OCI-LY7 (cell line): ENCODE measurements at regions of chr7 and their contacts with region 1.

Region 1: DNA sequence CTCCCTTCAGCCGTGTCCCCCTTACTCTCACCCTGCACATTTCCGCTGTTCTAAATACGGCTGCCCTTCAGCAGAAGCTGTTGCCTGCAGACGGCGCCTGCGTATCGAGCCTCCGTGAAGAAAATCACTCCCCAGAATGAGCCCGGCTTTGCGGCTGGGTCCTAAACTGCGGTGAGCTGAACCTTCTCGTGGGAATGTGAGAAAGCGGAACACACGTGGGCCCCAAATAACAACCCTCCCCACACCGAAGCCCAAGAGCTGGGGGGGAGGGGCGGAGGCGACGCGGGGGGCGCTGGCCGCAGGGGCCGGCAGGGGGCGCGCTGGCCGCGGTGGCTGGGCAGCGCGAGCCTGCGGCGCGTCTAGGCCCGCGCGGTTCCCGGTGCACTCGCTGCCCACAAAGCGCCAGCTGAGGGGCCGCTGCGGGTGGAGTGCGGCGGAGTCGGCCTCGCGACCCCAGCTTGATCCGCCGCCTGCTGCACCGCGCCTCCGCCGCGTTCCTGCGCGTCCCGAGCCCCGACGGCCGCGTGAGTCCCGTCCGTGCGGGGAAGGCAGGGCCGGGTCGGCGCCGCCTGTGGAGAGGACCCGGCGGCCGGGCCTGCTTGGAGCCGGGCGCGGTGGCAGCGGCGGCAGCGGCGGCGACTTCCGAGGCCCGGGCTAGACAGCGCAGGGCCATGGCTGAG is at the start of gene ZNF398:
- DNase-seq: peak; percentile 88
- H3K4me3 ChIP-seq: peak within 1 kb of the TSS; percentile 93
- H3K27ac ChIP-seq: peak within 1 kb of the TSS; percentile 82
- H3K4me1 ChIP-seq: peaks cover 29% of the 10 kb centered on the region
- CTCF ChIP-seq: peak; percentile 79
- total RNA-seq, gene ZNF398: 11.4 and 11.8 TPM in 2 replicates

Region 2: DNA sequence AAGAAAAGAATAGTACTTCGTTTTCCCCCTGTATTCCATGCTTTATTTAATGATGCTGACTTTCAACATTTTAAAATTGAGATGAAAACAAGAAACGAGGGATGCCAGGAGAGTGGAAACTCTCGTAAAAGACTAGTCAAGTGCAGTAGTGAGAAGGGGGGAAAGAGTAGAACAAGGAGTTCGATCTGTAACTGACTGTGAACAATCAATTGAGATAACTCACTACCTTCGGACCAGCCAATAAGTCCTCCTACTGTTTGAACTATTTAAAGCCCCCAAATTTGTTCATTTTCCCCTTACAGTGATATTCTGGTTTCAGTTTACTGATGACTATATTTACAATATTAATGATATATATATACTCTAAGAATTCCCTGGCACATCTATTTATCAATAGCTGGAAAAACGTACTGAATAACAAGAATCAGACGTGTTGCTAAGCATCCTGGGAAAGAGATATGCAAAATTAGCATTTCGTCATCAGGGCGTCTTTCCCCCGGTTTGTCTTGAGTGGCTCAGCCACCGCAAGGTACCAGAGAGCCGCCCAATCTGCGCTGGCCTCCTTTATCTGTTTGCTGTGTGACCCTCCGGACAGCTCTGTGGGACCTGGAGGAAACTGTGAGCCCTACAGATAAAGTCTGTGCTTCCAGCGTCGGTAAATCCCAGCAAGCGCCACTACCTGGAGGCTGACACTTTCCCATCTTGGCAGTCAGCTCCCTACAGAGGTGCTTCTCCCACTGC is 160.0 kb before region 1 on chr7:
- CTCF ChIA-PET with region 1: no interaction called
- POLR2A ChIA-PET with region 1: no interaction called
- intact Hi-C with region 1: loop called (anchors 5 kb)
- DNase-seq: peak; percentile 94
- H3K4me3 ChIP-seq: peak overlapping the region; percentile 87
- H3K27ac ChIP-seq: peak overlapping the region; percentile 46
- H3K4me1 ChIP-seq: peaks cover 22% of the 10 kb centered on the region
- CTCF ChIP-seq: no peak

Region 3: DNA sequence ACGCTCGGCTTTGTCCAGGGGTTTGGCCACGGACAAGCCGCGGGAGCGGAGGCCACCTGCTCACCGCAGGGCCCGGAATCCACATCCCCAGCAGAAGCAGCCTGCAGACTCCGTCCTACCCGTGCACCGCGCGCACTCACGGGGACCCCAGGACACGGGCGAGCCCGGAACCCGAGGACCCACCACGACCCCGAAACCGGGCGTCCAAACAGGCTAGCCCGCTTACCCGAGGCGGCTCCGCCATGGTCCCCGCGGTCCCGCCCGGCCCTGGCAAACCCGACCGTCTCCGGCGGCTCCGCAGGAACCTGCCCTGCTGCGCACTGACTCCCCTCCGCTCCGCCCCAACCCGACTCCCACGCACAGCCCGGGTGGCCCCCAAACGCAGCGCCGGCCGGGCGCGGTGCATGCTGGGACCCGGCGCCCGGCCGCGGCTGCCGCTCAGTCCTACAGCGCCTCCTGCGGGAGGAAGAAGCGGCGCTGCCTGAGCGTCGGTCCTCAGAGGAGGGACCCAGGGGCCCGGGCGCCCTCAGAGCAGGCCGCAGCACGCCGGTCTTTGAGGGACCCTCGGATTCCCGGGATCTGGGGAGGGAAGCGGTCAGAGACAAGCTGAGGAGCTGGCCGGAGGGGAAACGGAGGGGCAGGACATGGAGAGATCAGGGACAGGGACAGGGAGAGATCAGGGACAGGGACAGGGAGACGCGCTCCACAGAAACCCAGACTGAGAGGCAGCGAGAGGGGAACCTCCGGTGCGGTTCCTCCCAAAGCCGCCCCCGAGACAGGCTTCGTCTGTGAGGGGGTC is 56.6 kb before region 1 on chr7 and contains the start of gene ZNF786:
- CTCF ChIA-PET with region 1: no interaction called
- POLR2A ChIA-PET with region 1: no interaction called
- intact Hi-C with region 1: loop called (anchors 2 kb)
- DNase-seq: peak; percentile 94
- H3K4me3 ChIP-seq: peak within 1 kb of the TSS; percentile 95
- H3K27ac ChIP-seq: peak within 1 kb of the TSS; percentile 76
- H3K4me1 ChIP-seq: peaks cover 28% of the 10 kb centered on the region
- CTCF ChIP-seq: peak; percentile 83
- total RNA-seq, gene ZNF786: 3.9 and 5.1 TPM in 2 replicates

Region 4: GRCh38 chr7:149125863-149126661 is 21.1 kb before region 1 on chr7 and contains the start of gene ZNF425:
- CTCF ChIA-PET with region 1: interaction called, 12 read pairs
- POLR2A ChIA-PET with region 1: interaction called, 15 read pairs
- intact Hi-C with region 1: loop called (anchors 1 kb)
- DNase-seq: peak; percentile 95
- H3K4me3 ChIP-seq: peak within 1 kb of the TSS; percentile 84
- H3K27ac ChIP-seq: peak within 1 kb of the TSS; percentile 70
- H3K4me1 ChIP-seq: peaks cover 13% of the 10 kb centered on the region
- CTCF ChIP-seq: peak; percentile 87
- total RNA-seq, gene ZNF425: 0.28 and 1.4 TPM in 2 replicates

Region 5: GRCh38 chr7:149171892-149172533 is 24.8 kb after region 1 on chr7:
- CTCF ChIA-PET with region 1: no interaction called
- POLR2A ChIA-PET with region 1: interaction called, 14 read pairs
- intact Hi-C with region 1: no loop called
- DNase-seq: no peak
- H3K4me3 ChIP-seq: no peak overlapping the region
- H3K27ac ChIP-seq: no peak overlapping the region
- H3K4me1 ChIP-seq: no peaks in the 10 kb centered on the region
- CTCF ChIP-seq: no peak

Region 6: GRCh38 chr7:149195180-149196150 is 48.3 kb after region 1 on chr7 and contains the start of gene ZNF282:
- CTCF ChIA-PET with region 1: no interaction called
- POLR2A ChIA-PET with region 1: interaction called, 3 read pairs
- intact Hi-C with region 1: loop called (anchors 1 kb)
- DNase-seq: peak; percentile 84
- H3K4me3 ChIP-seq: peak within 1 kb of the TSS; percentile 92
- H3K27ac ChIP-seq: peak within 1 kb of the TSS; percentile 20
- H3K4me1 ChIP-seq: peaks cover 18% of the 10 kb centered on the region
- CTCF ChIP-seq: peak; percentile 79
- total RNA-seq, gene ZNF282: 13.3 and 15.4 TPM in 2 replicates

Region 7: GRCh38 chr7:149239345-149240191 is 92.4 kb after region 1 on chr7 and contains the start of gene ZNF212:
- CTCF ChIA-PET with region 1: no interaction called
- POLR2A ChIA-PET with region 1: no interaction called
- intact Hi-C with region 1: loop called (anchors 5 kb)
- DNase-seq: peak; percentile 92
- H3K4me3 ChIP-seq: peak within 1 kb of the TSS; percentile 81
- H3K27ac ChIP-seq: peak within 1 kb of the TSS; percentile 23
- H3K4me1 ChIP-seq: peaks cover 16% of the 10 kb centered on the region
- CTCF ChIP-seq: peak; percentile 84
- total RNA-seq, gene ZNF212: 11.6 and 13.1 TPM in 2 replicates

Region 8: DNA sequence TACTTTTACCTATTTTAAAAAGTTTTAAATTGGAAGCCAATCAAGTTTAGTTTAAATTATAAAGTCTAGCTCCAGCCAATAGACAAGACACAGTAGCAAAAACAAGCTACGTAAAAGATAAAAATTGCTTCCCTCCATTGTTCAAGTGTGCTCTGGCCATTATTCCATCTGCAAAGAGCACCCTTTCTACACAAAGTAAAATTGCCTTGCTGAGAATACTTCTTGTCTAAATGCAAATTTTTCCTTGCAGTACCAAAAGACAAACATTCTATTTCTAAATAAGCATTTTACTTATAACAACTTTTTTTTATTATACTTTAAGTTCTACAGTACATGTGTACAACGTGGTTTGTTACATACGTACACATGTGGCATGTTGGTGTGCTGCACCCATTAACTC is 426.3 kb after region 1 on chr7:
- CTCF ChIA-PET with region 1: no interaction called
- POLR2A ChIA-PET with region 1: no interaction called
- intact Hi-C with region 1: no loop called
- DNase-seq: peak; percentile 21
- H3K4me3 ChIP-seq: no peak overlapping the region
- H3K27ac ChIP-seq: no peak overlapping the region
- H3K4me1 ChIP-seq: no peaks in the 10 kb centered on the region
- CTCF ChIP-seq: no peak

Region 9: GRCh38 chr7:149742075-149742701 is 595.0 kb after region 1 on chr7:
- CTCF ChIA-PET with region 1: no interaction called
- POLR2A ChIA-PET with region 1: no interaction called
- intact Hi-C with region 1: no loop called
- DNase-seq: peak; percentile 74
- H3K4me3 ChIP-seq: peak overlapping the region; percentile 49
- H3K27ac ChIP-seq: no peak overlapping the region
- H3K4me1 ChIP-seq: peaks cover 3% of the 10 kb centered on the region
- CTCF ChIP-seq: peak; percentile 93